Gastrocnemius medialis (tissue), 4 donors: ENCODE measurements at regions of chr20 and their contacts with region 1.

Region 1: GRCh38 chr20:61219021-61219431 is 33.0 kb upstream of the CDH4 start:
- DNase-seq: no peak
- ATAC-seq: no peak
- H3K4me3 ChIP-seq: no peak overlapping the region
- H3K27ac ChIP-seq: no peak overlapping the region
- H3K4me1 ChIP-seq: no peaks in the 10 kb centered on the region
- H3K27me3 ChIP-seq: peaks cover 0 to 2% (median 0%) of the 10 kb centered on the region in 3 donors
- CTCF ChIP-seq: no peak
- POLR2A ChIP-seq: no peak

Region 2: GRCh38 chr20:61299618-61300017 is 80.6 kb after region 1 on chr20:
- in situ Hi-C with region 1: loop called in 1 of 4 experiments (anchors 25 kb)
- intact Hi-C with region 1: no loop called
- DNase-seq: no peak
- ATAC-seq: no peak
- H3K4me3 ChIP-seq: no peak overlapping the region
- H3K27ac ChIP-seq: no peak overlapping the region
- H3K4me1 ChIP-seq: no peaks in the 10 kb centered on the region
- H3K27me3 ChIP-seq: no peaks in the 10 kb centered on the region
- CTCF ChIP-seq: no peak
- POLR2A ChIP-seq: no peak

Region 3: GRCh38 chr20:61712688-61713087 is 493.7 kb after region 1 on chr20:
- in situ Hi-C with region 1: no loop called
- intact Hi-C with region 1: loop called (anchors 5 kb)
- DNase-seq: no peak
- ATAC-seq: no peak
- H3K4me3 ChIP-seq: no peak overlapping the region
- H3K27ac ChIP-seq: no peak overlapping the region
- H3K4me1 ChIP-seq: no peaks in the 10 kb centered on the region
- H3K27me3 ChIP-seq: no peaks in the 10 kb centered on the region
- CTCF ChIP-seq: no peak
- POLR2A ChIP-seq: no peak